Right ventricle myocardium superior (tissue), 1 donor: ENCODE measurements at regions of chr6 and their contacts with region 1.

Region 1: DNA sequence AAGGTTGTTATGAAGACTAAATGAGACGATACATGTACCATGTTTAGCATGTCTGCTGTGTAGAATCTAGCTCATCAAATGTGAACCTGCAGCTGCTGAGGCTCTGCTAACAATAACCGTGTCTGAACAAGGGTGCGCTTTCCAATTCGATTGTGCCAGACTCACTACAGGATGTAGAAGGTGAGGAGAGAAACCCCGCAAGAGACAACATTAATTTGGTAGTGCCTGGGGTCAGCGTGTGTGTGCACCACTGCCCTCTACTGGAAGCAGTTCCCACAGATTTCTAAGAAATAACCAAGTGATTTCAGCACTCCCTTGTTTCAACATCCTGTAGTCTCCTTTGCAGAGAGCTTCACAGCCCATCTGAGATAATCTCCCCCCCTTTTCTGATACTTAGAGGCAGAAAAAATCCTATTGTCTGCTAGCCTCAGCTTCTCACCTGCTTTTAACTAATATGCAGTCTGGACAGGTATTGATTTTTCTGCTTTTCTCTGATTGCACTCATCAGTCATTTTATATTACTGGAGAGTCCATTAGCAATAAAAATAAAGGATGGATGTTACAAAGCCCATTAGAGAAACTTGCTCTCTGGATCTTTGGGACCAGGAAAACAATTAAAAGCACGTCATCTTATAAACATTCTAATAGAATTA is 96.7 kb upstream of the BACH2 start:
- DNase-seq: no peak
- ATAC-seq: peak; percentile 77

Region 2: DNA sequence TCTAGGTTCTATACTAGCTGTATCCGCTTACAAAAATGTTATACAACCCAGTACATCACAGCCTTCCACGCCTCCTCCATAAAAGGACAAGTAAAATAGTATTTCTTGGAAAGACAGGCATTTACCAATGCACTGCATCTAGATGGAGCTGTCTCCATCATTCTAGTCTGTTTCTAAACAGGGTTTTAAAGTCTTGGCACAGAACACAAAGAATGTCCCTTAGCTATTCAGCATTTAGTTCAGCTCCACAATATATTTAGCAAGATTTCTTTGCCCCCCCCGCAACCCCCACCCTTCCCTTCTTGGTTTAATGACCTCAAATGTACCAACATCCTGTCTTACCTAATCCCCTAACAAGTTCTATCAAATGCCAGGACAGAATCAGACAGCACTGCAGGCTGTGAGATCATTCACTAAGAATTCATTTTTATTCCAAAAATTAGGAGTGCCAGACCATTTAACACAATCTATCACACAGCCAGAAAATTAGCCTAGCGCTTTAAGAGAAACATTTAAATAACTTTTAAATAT is 295.3 kb before region 1 on chr6:
- intact Hi-C with region 1: loop called (anchors 10 kb)
- DNase-seq: peak; percentile 63
- ATAC-seq: peak; percentile 90

Region 3: DNA sequence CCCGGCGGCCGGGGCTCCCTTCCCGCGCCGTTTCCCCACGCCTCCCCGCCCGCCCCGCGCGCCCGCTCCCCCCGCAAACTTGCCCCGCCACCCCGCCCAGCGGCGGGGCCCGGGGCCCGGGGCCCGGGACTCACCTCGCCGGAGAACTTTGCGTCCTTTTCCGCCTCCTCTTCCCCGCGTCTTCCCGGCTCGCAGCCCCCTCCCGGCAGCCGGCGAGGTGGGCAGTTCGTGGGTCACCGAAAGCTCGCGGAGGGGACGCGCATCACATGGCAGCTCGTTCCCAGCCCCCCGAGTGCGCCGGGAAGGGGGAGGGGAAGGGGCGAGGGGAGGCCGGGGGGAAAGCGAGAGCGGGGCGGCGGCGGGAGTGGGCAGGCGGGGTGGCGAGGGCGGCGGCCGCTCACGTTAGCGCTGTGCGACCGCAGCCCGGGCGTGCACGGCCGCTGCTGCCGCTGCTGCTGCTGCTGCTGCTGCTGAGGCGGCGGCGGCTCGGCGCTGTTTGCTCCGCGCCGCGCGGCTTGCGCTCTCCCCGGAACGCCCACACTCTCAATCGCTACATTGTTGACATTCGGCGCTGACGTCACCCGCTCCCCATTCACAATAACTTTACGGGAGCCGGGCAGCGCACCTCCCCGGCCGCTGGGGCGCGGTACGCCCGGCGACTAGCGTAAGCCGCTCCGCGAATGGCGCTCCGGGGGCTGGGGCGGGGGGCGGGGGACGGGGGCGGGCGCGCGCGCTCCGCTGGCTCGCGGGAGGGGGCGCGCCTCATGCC is 96.8 kb before region 1 on chr6 and contains the start of gene BACH2:
- intact Hi-C with region 1: loop called (anchors 5 kb)
- DNase-seq: peak; percentile 95
- ATAC-seq: peak; percentile 74
- total RNA-seq, gene BACH2: 1.9 TPM

Region 4: GRCh38 chr6:90338422-90338821 is 54.9 kb before region 1 on chr6:
- intact Hi-C with region 1: no loop called
- DNase-seq: no peak
- ATAC-seq: no peak